Activated CD4-positive, alpha-beta T cell treated with anti-CD3 and anti-CD28 coated beads for 36 hours (primary cell): ENCODE measurements at regions of chr4 and their contacts with region 1.

Region 1: GRCh38 chr4:169612871-169613859 is 782 bp upstream of the NEK1 start:
- DNase-seq: peak; percentile 82
- ATAC-seq: peak; percentile 30
- H3K4me3 Mint-ChIP-seq: peak overlapping the region; percentile 92
- H3K27ac Mint-ChIP-seq: peak overlapping the region; percentile 97
- H3K4me1 Mint-ChIP-seq: peaks cover 50% of the 10 kb centered on the region
- H3K27me3 Mint-ChIP-seq: no peaks in the 10 kb centered on the region

Region 2: DNA sequence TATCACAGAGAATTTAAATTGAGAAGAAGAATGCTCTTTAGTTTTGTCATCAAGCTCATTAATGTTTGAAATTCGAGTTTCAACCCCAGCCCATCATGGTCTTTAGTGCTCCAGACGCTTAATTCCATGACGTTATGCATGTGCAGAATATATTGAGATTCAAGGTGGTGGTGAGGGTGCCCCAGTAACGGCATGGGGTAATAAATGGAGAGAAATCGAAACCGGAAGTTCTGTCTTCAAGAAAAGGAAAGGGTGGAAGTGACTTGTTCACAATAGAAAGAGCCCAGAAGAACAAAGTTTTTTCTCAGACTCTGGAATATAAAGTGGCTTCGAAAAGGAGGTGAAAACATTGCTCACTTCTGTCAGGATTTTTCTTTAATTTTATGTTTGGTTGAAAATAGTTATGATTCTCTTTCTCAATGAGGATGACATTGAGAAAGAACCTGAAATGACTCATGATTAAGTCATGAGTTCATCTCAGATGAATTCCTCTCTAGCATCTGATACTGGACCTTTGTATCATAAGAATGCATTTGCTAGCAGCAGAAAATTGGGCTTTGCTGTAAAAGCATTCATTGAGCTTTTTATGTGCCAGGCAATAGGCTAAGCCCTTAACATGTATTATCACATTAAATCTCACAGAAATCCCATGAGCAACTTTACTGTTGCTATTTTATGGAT is 1132.1 kb before region 1 on chr4:
- CTCF ChIA-PET with region 1: no interaction called
- POLR2A ChIA-PET with region 1: no interaction called
- intact Hi-C with region 1: loop called (anchors 5 to 10 kb)
- DNase-seq: peak; percentile 51
- ATAC-seq: peak; percentile 66
- H3K4me3 Mint-ChIP-seq: peak overlapping the region; percentile 80
- H3K27ac Mint-ChIP-seq: peak overlapping the region; percentile 95
- H3K4me1 Mint-ChIP-seq: peaks cover 64% of the 10 kb centered on the region
- H3K27me3 Mint-ChIP-seq: no peaks in the 10 kb centered on the region

Region 3: GRCh38 chr4:168995537-168996295 is 617.4 kb before region 1 on chr4:
- CTCF ChIA-PET with region 1: no interaction called
- POLR2A ChIA-PET with region 1: no interaction called
- intact Hi-C with region 1: no loop called
- DNase-seq: no peak
- ATAC-seq: no peak
- H3K4me3 Mint-ChIP-seq: no peak overlapping the region
- H3K27ac Mint-ChIP-seq: no peak overlapping the region
- H3K4me1 Mint-ChIP-seq: peaks cover 1% of the 10 kb centered on the region
- H3K27me3 Mint-ChIP-seq: no peaks in the 10 kb centered on the region

Region 4: GRCh38 chr4:169627307-169627706 is 14.1 kb after region 1 on chr4:
- CTCF ChIA-PET with region 1: interaction called, 12 read pairs
- POLR2A ChIA-PET with region 1: interaction called, 5 read pairs
- intact Hi-C with region 1: no loop called
- DNase-seq: no peak
- ATAC-seq: no peak
- H3K4me3 Mint-ChIP-seq: no peak overlapping the region
- H3K27ac Mint-ChIP-seq: peak overlapping the region; percentile 86
- H3K4me1 Mint-ChIP-seq: peaks cover 50% of the 10 kb centered on the region
- H3K27me3 Mint-ChIP-seq: no peaks in the 10 kb centered on the region

Region 5: GRCh38 chr4:169707958-169708643 is 94.9 kb after region 1 on chr4:
- CTCF ChIA-PET with region 1: interaction called, 3 read pairs
- POLR2A ChIA-PET with region 1: no interaction called
- intact Hi-C with region 1: loop called in 1 of 2 experiments (anchors 2 kb)
- DNase-seq: no peak
- ATAC-seq: no peak
- H3K4me3 Mint-ChIP-seq: no peak overlapping the region
- H3K27ac Mint-ChIP-seq: no peak overlapping the region
- H3K4me1 Mint-ChIP-seq: peaks cover 6% of the 10 kb centered on the region
- H3K27me3 Mint-ChIP-seq: no peaks in the 10 kb centered on the region

Region 6: DNA sequence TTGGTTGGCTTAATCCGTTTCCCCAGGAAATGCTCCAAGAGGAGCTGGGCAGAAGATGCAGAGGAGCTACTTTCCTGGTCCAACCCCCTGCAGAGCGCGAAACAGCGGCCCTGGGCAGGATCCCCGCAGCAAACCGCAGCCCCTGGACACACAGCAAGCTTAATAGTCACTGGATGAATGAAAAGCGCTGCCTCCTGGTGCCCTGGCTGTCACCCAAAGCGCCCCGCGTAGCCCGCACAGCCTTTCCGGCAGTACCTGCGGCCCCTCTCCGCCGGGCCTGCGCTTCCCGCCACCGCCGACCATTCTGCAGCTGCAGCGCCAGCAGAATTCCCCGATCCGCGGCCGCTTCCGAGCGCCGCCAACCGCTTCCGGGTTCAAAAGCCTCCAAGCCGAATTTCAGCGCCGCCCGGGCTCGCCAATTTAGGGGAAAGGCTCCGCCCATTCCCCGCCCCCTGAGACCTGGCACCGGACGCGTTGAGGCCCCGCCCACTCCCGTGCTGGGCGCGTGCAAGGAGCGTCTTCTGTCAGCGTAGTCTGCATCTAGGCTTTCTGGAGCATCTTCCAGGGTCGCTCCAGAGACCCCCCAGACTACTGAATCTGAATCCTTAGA is 144.5 kb after region 1 on chr4 and contains the start of gene HPF1:
- CTCF ChIA-PET with region 1: interaction called, 3 read pairs
- POLR2A ChIA-PET with region 1: interaction called, 3 read pairs
- intact Hi-C with region 1: loop called (anchors 1 kb)
- DNase-seq: peak; percentile 97
- ATAC-seq: peak; percentile 94
- H3K4me3 Mint-ChIP-seq: peak within 1 kb of the TSS; percentile 82
- H3K27ac Mint-ChIP-seq: peak within 1 kb of the TSS; percentile 68
- H3K4me1 Mint-ChIP-seq: peaks cover 15% of the 10 kb centered on the region
- H3K27me3 Mint-ChIP-seq: peaks cover under 1% of the 10 kb centered on the region
- total RNA-seq, gene HPF1: 29.8 to 34.7 TPM

Region 7: GRCh38 chr4:169922632-169923276 is 309.6 kb after region 1 on chr4:
- CTCF ChIA-PET with region 1: no interaction called
- POLR2A ChIA-PET with region 1: no interaction called
- intact Hi-C with region 1: no loop called
- DNase-seq: no peak
- ATAC-seq: no peak
- H3K4me3 Mint-ChIP-seq: no peak overlapping the region
- H3K27ac Mint-ChIP-seq: no peak overlapping the region
- H3K4me1 Mint-ChIP-seq: no peaks in the 10 kb centered on the region
- H3K27me3 Mint-ChIP-seq: peaks cover 3% of the 10 kb centered on the region

Region 8: GRCh38 chr4:170027181-170027829 is 414.1 kb after region 1 on chr4:
- CTCF ChIA-PET with region 1: interaction called, 4 read pairs
- POLR2A ChIA-PET with region 1: no interaction called
- intact Hi-C with region 1: loop called (anchors 1 to 2 kb)
- DNase-seq: peak; percentile 94
- ATAC-seq: peak; percentile 77
- H3K4me3 Mint-ChIP-seq: peak overlapping the region; percentile 71
- H3K27ac Mint-ChIP-seq: peak overlapping the region; percentile 69
- H3K4me1 Mint-ChIP-seq: peaks cover 10% of the 10 kb centered on the region
- H3K27me3 Mint-ChIP-seq: peaks cover 15% of the 10 kb centered on the region